ENCODE measurements at regions of chr1 and their contacts with region 1.

Region 1: DNA sequence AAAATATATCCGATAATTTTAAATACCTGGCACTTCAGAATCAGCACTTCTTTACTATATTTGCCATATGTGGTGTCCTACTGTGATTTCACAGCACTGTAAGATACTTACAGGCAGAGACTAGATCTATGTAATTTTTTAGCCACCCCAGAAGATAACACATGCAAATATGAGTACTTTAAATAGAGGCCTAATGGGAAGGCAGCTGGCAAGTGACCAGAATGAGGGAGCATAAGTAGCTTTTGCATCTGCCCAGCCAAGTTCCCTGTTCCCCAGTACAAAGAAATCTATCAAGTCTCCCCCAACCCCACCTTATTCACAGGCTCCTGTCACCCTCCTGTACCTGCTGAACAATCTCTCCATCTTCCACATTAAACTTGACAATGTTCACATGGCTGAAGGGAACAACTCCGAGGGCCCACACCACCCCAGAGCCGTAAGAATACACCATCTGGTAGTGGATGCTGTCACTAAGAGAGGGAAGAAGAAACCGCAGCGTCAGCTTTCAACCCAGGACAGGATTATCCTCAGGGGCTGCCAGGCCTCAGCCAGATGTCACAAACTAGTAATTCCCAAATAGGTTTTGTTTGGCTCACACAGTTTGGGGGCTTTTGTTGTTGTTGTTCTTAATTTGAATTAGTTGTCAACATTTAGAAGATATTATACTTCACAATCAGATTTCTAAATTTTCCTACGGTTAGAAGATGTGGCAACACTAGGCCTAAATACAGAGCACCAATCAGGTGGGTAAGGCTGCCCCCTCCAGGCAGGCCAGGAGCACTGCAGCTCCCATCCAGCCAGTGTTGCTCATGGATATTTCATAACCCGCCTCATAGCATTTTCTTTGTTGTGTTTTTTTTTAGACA is 10.4 kb downstream of the EMC1 start:
- DNase-seq: peak; percentile 86
- H3K4me3 ChIP-seq: no peak overlapping the region
- H3K27ac ChIP-seq: peak overlapping the region; percentile 53 to 62 (median 60)
- H3K4me1 ChIP-seq: peaks cover 0 to 5% (median 2%) of the 10 kb centered on the region in 4 donors
- H3K27me3 ChIP-seq: no peaks in the 10 kb centered on the region
- CTCF ChIP-seq: peak; percentile 83 to 95 (median 91)
- EP300 ChIP-seq: no peak
- POLR2A ChIP-seq: no peak

Region 2: GRCh38 chr1:19156676-19157075 is 84.2 kb before region 1 on chr1:
- intact Hi-C with region 1: loop called (anchors 5 kb)
- DNase-seq: peak; percentile 76
- H3K4me3 ChIP-seq: no peak overlapping the region
- H3K27ac ChIP-seq: peak overlapping the region in 1 of 4 donors; percentile 46
- H3K4me1 ChIP-seq: no peaks in the 10 kb centered on the region
- H3K27me3 ChIP-seq: no peaks in the 10 kb centered on the region
- CTCF ChIP-seq: no peak
- EP300 ChIP-seq: no peak
- POLR2A ChIP-seq: no peak

Region 3: GRCh38 chr1:19209990-19210771 is 30.7 kb before region 1 on chr1 and contains the start of gene UBR4:
- intact Hi-C with region 1: loop called (anchors 1 kb)
- DNase-seq: peak; percentile 98
- H3K4me3 ChIP-seq: peak within 1 kb of the TSS; percentile 67 to 94 (median 84)
- H3K27ac ChIP-seq: peak within 1 kb of the TSS; percentile 95 to 98 (median 96)
- H3K4me1 ChIP-seq: peaks cover 0 to 60% (median 50%) of the 10 kb centered on the region in 4 donors
- H3K27me3 ChIP-seq: no peaks in the 10 kb centered on the region
- CTCF ChIP-seq: no peak
- EP300 ChIP-seq: peak in 1 of 4 donors; percentile 89
- POLR2A ChIP-seq: peak; percentile 82 to 93
- total RNA-seq, gene UBR4: 64.3 to 215 (median 85.5) TPM

Region 4: GRCh38 chr1:19325958-19326748 is 85.2 kb after region 1 on chr1:
- intact Hi-C with region 1: no loop called
- DNase-seq: no peak
- H3K4me3 ChIP-seq: no peak overlapping the region
- H3K27ac ChIP-seq: no peak overlapping the region
- H3K4me1 ChIP-seq: no peaks in the 10 kb centered on the region
- H3K27me3 ChIP-seq: no peaks in the 10 kb centered on the region
- CTCF ChIP-seq: no peak
- EP300 ChIP-seq: no peak
- POLR2A ChIP-seq: no peak

Measured in sigmoid colon (tissue), 7 donors.